ENCODE measurements at regions of chrX and their contacts with region 1.

Region 1: DNA sequence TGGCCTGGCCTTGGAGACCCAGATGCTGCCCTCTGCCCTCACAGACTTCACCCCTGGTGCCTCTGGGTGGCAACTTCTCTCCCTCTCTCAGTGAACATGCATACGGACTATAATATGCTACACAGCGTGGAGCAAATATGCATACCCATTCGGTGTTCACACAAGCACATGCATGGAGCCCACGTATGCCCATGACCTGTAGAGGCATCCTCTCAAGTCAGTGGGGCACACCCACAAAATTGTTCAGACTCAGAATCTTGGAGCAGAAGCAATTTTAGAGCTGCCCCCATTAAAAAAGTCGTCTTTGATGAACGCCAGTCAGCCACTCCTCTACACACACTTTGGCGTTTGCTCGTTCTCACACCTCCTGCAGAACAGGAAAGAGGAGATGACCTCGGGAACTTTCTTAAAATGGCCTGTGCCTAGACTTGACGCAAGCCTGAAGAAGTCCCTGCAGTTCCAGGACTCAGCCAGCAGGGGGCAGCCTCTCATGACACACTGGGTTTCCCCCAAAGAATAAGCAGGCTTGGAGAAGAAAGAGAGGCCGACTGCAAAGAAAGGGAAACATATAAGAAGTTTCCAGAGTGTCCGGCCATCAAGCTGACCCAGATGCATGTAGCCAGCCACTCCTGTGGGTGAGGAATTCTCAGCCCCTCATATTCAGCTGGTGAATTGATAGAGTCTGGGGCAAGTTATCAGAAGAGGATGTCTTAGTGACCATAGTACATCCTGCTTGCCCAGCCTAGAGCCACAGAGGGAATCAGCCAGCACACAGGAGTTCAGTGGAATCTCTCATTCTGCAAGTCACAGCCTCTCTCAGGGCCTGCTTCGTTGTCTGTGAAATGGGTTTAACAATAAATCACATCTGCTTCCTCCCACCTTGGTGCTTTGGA is 17.3 kb downstream of the APLN start:
- DNase-seq: peak; percentile 78
- ATAC-seq: peak; percentile 86
- H3K4me3 Mint-ChIP-seq: no peak overlapping the region
- H3K27ac Mint-ChIP-seq: no peak overlapping the region
- H3K4me1 Mint-ChIP-seq: peaks cover 12% of the 10 kb centered on the region
- H3K27me3 Mint-ChIP-seq: peaks cover 3% of the 10 kb centered on the region

Region 2: GRCh38 chrX:129606918-129607317 is 30.5 kb before region 1 on chrX:
- CTCF ChIA-PET with region 1: interaction called, 12 read pairs
- POLR2A ChIA-PET with region 1: no interaction called
- DNase-seq: peak; percentile 69
- ATAC-seq: peak; percentile 48
- H3K4me3 Mint-ChIP-seq: no peak overlapping the region
- H3K27ac Mint-ChIP-seq: no peak overlapping the region
- H3K4me1 Mint-ChIP-seq: peaks cover 22% of the 10 kb centered on the region
- H3K27me3 Mint-ChIP-seq: peaks cover 7% of the 10 kb centered on the region

Region 3: DNA sequence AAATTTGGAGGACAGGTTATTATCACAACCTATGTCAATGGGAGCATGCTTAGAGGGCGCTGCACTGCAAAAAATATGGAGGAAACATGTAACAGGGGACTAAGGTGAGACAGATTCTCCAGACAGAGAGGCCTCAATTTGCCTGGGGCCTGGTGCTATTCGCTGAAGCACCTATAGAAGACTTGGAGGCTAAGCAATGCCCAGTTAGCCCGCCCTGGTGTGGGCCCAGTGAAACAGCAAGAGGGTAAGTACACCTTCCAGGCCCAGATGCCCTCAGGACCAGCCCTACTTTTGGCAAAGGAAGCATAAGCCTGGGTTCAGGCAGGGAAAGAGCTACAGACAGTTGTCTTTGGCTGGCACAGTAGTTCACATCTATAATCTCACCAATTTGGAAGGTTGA is 15.5 kb before region 1 on chrX:
- CTCF ChIA-PET with region 1: no interaction called
- POLR2A ChIA-PET with region 1: no interaction called
- DNase-seq: no peak
- ATAC-seq: no peak
- H3K4me3 Mint-ChIP-seq: no peak overlapping the region
- H3K27ac Mint-ChIP-seq: no peak overlapping the region
- H3K4me1 Mint-ChIP-seq: no peaks in the 10 kb centered on the region
- H3K27me3 Mint-ChIP-seq: no peaks in the 10 kb centered on the region

Region 4: DNA sequence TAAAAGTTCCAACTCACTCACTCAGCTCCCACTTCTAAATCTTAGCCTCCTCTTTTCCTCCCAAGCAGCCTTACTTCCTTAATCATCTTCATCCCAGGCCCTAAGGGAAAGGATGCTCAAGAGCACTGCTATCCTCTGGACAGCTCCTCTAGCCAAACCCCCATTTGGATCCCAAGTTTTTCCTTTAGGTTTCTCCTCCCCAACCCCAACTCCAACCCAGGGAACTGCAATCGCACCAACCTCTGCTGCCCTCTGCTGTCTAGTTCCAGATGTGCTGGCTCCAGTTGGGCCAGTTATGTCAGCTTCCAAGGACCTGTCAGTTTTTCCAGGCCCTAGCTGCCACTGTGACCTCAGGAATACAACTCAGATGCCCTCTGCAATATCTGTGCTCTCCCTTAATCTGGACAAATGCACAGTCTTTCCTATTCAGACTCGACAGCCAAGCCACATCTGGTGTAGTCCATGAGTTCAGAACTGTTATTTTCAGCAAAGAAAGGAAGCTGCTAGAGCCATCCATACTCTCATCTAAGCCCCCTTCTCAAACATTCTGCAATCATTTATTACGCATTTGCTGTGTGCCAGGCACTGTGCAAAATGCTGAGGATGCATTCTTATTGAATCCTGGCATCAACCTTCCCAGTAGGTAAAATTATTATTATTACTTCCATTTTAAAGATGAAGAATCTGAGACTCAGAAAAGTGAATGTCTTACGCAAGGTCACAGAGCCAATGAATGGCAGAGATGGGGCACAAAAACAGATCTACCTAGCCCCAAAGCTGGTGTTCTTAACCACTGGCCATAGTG is 89.0 kb after region 1 on chrX:
- CTCF ChIA-PET with region 1: interaction called, 32 read pairs
- POLR2A ChIA-PET with region 1: no interaction called
- DNase-seq: no peak
- ATAC-seq: no peak
- H3K4me3 Mint-ChIP-seq: no peak overlapping the region
- H3K27ac Mint-ChIP-seq: no peak overlapping the region
- H3K4me1 Mint-ChIP-seq: peaks cover 43% of the 10 kb centered on the region
- H3K27me3 Mint-ChIP-seq: no peaks in the 10 kb centered on the region

Region 5: GRCh38 chrX:129823115-129823514 is 185.7 kb after region 1 on chrX:
- CTCF ChIA-PET with region 1: interaction called, 20 read pairs
- POLR2A ChIA-PET with region 1: no interaction called
- DNase-seq: peak; percentile 70
- ATAC-seq: peak; percentile 82
- H3K4me3 Mint-ChIP-seq: no peak overlapping the region
- H3K27ac Mint-ChIP-seq: no peak overlapping the region
- H3K4me1 Mint-ChIP-seq: peaks cover 14% of the 10 kb centered on the region
- H3K27me3 Mint-ChIP-seq: no peaks in the 10 kb centered on the region

Region 6: DNA sequence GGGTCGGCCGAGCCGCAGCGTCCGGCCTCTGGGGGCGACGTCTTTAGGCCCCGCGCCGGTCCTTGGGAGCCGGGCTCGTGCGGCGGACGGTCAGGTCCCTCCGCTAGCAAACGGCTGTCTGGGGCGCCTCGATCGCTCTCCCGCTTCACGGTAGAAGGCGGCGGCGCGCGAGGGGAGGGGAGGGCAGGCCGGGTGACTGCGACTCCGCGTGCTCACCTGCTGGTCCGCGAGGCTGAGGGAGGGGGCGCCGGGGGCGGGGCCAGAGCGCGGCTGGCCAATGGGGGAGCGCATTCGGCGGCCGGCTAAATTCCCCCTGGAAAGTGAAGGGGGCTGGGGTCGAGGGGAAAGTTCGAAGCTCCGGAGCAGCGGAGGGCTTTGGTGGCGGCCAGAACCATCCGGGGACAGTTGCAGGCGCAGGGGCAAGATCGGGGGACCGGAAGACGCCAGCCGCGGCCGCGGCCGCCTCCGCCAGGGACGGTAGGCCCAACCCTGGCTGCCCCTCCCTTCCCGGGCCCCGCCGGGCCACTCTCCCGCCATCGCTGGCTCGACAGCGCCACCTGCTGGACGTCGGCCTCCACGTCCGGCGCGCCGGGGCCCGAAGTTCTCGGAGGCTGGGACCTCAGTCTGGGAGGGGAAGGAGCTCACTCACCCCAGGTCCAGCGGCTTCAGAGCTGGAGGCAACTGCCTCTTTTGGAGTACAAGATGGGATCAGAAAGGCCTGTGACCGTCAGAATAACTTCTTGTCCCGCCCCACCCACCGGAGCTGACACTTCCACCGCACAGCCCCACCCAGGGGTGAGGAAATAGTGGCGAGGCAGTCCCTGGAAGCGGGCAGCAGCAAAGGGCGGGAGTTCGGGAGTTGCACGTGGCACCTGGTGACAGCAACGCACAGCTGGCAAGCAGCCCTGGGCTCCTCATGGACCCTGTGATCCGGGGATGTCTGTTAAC is 422.9 kb after region 1 on chrX:
- CTCF ChIA-PET with region 1: interaction called, 10 read pairs
- POLR2A ChIA-PET with region 1: no interaction called
- DNase-seq: peak; percentile 82
- ATAC-seq: peak; percentile 94
- H3K4me3 Mint-ChIP-seq: peak overlapping the region; percentile 72
- H3K27ac Mint-ChIP-seq: peak overlapping the region; percentile 79
- H3K4me1 Mint-ChIP-seq: peaks cover 7% of the 10 kb centered on the region
- H3K27me3 Mint-ChIP-seq: no peaks in the 10 kb centered on the region

Region 7: GRCh38 chrX:130413415-130413814 is 776.0 kb after region 1 on chrX:
- CTCF ChIA-PET with region 1: no interaction called
- POLR2A ChIA-PET with region 1: no interaction called
- DNase-seq: no peak
- ATAC-seq: no peak
- H3K4me3 Mint-ChIP-seq: no peak overlapping the region
- H3K27ac Mint-ChIP-seq: no peak overlapping the region
- H3K4me1 Mint-ChIP-seq: peaks cover 1% of the 10 kb centered on the region
- H3K27me3 Mint-ChIP-seq: no peaks in the 10 kb centered on the region